H1 (cell line): ENCODE measurements at regions of chr21 and their contacts with region 1.

Region 1: GRCh38 chr21:41121785-41122421 is 46.1 kb upstream of the BACE2 start:
- DNase-seq: peak; percentile 56 to 96
- H3K4me3 ChIP-seq: no peak overlapping the region
- H3K27ac ChIP-seq: no peak overlapping the region
- H3K4me1 ChIP-seq: no peaks in the 10 kb centered on the region
- H3K27me3 ChIP-seq: no peaks in the 10 kb centered on the region; a peak in 1 of 7 replicates
- CTCF ChIP-seq: peak; percentile 83 to 99 (median 85)
- EP300 ChIP-seq: no peak
- POLR2A ChIP-seq: no peak
- RAD21 ChIP-seq: peak; percentile 90 to 92

Region 2: GRCh38 chr21:41133896-41134522 is 12.1 kb after region 1 on chr21:
- CTCF ChIA-PET with region 1: interaction called, 98 read pairs
- POLR2A ChIA-PET with region 1: no interaction called
- DNase-seq: no peak
- H3K4me3 ChIP-seq: no peak overlapping the region
- H3K27ac ChIP-seq: no peak overlapping the region
- H3K4me1 ChIP-seq: no peaks in the 10 kb centered on the region
- H3K27me3 ChIP-seq: no peaks in the 10 kb centered on the region; a peak in 1 of 7 replicates
- CTCF ChIP-seq: peak in 2 of 3 experiments; percentile 55 to 71; a peak in 3 of 4 replicates
- EP300 ChIP-seq: no peak
- POLR2A ChIP-seq: no peak
- RAD21 ChIP-seq: peak; percentile 71 to 72

Region 3: GRCh38 chr21:41147436-41148355 is 25.8 kb after region 1 on chr21:
- CTCF ChIA-PET with region 1: interaction called, 11 read pairs
- POLR2A ChIA-PET with region 1: no interaction called
- DNase-seq: no peak
- H3K4me3 ChIP-seq: no peak overlapping the region
- H3K27ac ChIP-seq: no peak overlapping the region
- H3K4me1 ChIP-seq: peaks cover 0 to 5% (median 0%) of the 10 kb centered on the region in 4 experiments; a peak in 2 of 7 replicates
- H3K27me3 ChIP-seq: peaks cover 0 to 10% (median 0%) of the 10 kb centered on the region in 4 experiments; a peak in 2 of 7 replicates
- CTCF ChIP-seq: peak in 2 of 3 experiments; percentile 1 to 11; a peak in 2 of 4 replicates
- EP300 ChIP-seq: no peak
- POLR2A ChIP-seq: no peak
- RAD21 ChIP-seq: no peak